Dorsolateral prefrontal cortex (tissue), 120 donors: ENCODE measurements at regions of chr14 and their contacts with region 1.

Region 1: GRCh38 chr14:28751467-28752058 is 15.0 kb upstream of the FOXG1 start:
- DNase-seq: peak in 4 of 10 donors; percentile 45 to 63 (median 52)
- H3K4me3 ChIP-seq: no peak overlapping the region
- H3K27ac ChIP-seq: no peak overlapping the region
- H3K27me3 ChIP-seq: peaks cover 0 to 33% (median 0%) of the 10 kb centered on the region in 45 donors
- CTCF ChIP-seq: peak; percentile 36 to 75 (median 58)

Region 2: DNA sequence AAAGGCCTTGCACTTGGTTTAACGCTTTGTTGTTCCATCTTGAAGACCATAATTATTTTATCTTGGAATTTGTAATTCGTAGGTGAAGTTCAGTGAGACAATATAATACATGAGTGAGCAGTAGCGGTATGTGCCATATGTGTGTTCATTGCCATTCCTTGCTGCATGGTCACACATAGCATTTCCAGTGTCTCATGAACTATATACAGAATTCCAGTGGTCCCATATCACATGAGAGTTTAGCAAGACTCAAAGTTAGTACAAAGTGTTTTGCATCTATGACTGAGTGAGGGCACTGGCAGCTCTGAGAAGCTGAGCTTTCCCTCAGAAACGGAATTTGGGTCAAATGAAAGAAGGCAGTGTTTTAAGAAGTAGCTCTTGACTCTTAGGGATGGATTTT is 374.8 kb after region 1 on chr14:
- intact Hi-C with region 1: no loop called
- DNase-seq: no peak
- H3K4me3 ChIP-seq: no peak overlapping the region
- H3K27ac ChIP-seq: no peak overlapping the region
- H3K27me3 ChIP-seq: no peaks in the 10 kb centered on the region
- CTCF ChIP-seq: no peak

Region 3: GRCh38 chr14:29536886-29537511 is 785.4 kb after region 1 on chr14:
- intact Hi-C with region 1: loop called (anchors 2 to 5 kb)
- DNase-seq: no peak
- H3K4me3 ChIP-seq: no peak overlapping the region
- H3K27ac ChIP-seq: no peak overlapping the region
- H3K27me3 ChIP-seq: no peaks in the 10 kb centered on the region
- CTCF ChIP-seq: peak; percentile 22 to 73 (median 57)

Region 4: GRCh38 chr14:30214461-30215090 is 1463.0 kb after region 1 on chr14:
- intact Hi-C with region 1: loop called (anchors 5 kb)
- DNase-seq: no peak
- H3K4me3 ChIP-seq: peak overlapping the region in 4 of 59 donors; percentile 2 to 29 (median 14)
- H3K27ac ChIP-seq: peak overlapping the region in 6 of 59 donors; percentile 11 to 35 (median 26)
- H3K27me3 ChIP-seq: no peaks in the 10 kb centered on the region
- CTCF ChIP-seq: peak; percentile 53 to 83 (median 70)